ENCODE measurements at regions of chr2 and their contacts with region 1.

Region 1: GRCh38 chr2:220154304-220154703 is 526.9 kb downstream of the SLC4A3 start:
- DNase-seq: no peak
- H3K4me3 ChIP-seq: no peak overlapping the region
- H3K27ac ChIP-seq: no peak overlapping the region
- H3K4me1 ChIP-seq: no peaks in the 10 kb centered on the region
- H3K27me3 ChIP-seq: no peaks in the 10 kb centered on the region
- CTCF ChIP-seq: peak in 1 of 2 donors; percentile 11

Region 2: DNA sequence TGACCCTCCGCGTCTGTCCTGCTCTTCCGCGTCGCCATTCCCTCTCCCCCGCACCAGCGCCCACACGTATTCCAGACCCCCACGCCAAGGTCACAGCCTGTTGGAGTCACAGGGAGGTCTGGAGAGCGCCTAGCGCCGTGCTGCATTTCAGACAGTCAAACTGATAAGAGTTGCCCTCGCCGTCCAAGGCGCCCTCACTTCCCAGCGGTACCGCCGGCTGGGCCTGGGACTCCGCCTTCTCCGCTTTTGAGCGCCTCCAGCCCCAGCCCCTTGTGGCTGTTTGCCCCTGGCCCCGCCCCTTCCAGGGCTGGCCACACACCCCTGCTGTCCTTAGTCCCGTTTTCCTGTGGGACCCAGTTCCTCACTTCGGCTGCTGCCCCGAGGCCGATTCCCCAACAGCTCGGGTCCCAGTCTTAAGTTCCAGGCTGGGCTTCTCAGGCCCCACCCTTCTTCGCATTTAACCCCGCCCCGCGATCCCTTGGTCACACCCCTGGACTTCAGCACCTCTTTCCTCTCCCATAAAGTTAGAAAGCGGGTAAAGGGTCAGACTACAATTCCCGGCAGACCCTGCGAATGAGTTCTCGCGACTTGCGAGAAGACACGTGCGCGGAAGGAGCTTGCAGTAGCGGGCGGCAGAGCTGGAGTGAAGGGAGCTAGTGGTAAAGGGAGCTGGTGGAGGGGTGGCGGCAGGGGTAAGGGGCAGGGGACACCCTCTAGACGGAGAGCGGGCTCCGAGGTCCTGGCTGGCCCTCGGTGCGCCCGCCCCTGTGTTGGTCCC is 655.8 kb before region 1 on chr2 and contains the start of gene GMPPA:
- CTCF ChIA-PET with region 1: no interaction called
- dilution Hi-C with region 1: no loop called
- in situ Hi-C with region 1: no loop called
- intact Hi-C with region 1: no loop called
- DNase-seq: peak; percentile 98
- H3K4me3 ChIP-seq: peak within 1 kb of the TSS; percentile 57 to 71 (median 65)
- H3K27ac ChIP-seq: peak within 1 kb of the TSS; percentile 53
- H3K4me1 ChIP-seq: peaks cover 18% of the 10 kb centered on the region
- H3K27me3 ChIP-seq: no peaks in the 10 kb centered on the region
- CTCF ChIP-seq: no peak
- total RNA-seq, gene GMPPA: 37.8 to 50.1 TPM

Region 3: DNA sequence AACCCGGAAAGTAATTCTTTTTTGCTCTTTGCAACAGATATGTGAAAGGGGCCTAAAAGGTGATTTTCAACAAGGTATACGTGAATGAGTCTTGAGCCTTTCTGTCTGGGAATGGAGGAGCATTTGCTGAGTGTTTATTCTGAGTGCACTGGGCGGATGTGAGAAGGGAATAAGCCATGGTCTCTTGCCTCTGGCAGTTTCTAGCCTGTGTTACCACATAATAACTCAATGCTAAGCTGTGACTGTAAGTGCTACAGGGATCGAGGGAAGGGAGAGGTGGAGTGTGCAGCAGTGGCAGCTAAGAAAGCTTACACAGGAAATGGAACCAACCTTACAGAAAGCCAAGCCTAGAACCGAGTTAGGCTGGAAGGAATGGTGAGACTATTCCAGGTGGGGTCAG is 82.6 kb before region 1 on chr2:
- CTCF ChIA-PET with region 1: no interaction called
- dilution Hi-C with region 1: loop called (anchors 5 kb)
- in situ Hi-C with region 1: no loop called
- intact Hi-C with region 1: no loop called
- DNase-seq: no peak
- H3K4me3 ChIP-seq: no peak overlapping the region
- H3K27ac ChIP-seq: no peak overlapping the region
- H3K4me1 ChIP-seq: no peaks in the 10 kb centered on the region
- H3K27me3 ChIP-seq: no peaks in the 10 kb centered on the region
- CTCF ChIP-seq: no peak